ENCODE measurements at regions of chr6 and their contacts with region 1.

Region 1: GRCh38 chr6:107674995-107675738 is 148.9 kb downstream of the SCML4 start:
- DNase-seq: peak; percentile 93
- H3K4me3 Mint-ChIP-seq: peak overlapping the region; percentile 46
- H3K27ac Mint-ChIP-seq: peak overlapping the region; percentile 54
- H3K4me1 Mint-ChIP-seq: peaks cover 21% of the 10 kb centered on the region
- H3K27me3 Mint-ChIP-seq: peaks cover 17% of the 10 kb centered on the region

Region 2: DNA sequence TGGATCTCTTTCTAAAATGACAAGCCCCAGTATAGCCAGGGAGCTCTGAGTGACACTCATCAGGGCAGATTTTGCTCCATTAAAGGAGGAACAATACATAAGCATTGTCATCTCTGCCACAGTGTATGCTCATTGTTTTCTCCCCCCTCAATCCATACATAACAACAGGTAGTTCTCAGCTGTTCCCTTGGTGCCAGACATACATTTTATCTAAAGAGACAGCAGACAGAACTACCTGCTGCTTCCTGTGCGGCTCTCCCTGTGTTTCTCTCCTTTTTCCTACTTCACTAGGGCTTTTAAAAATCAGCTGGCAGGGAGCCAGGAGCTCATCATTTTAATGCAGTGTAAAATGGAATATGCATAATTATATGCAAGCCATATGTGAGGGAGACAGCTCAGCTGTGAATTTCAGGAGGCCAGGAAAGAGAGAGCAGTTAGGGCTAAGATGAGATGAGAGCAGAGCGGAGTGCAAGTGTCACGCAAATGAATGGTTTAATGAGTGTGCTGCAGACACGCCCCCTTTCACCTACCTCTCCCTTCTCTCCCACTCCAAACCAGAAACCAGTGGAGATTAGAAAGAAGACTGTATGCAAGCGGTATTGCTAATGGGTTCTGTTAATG is 89.2 kb before region 1 on chr6:
- CTCF ChIA-PET with region 1: no interaction called
- DNase-seq: no peak
- H3K4me3 Mint-ChIP-seq: no peak overlapping the region
- H3K27ac Mint-ChIP-seq: no peak overlapping the region
- H3K4me1 Mint-ChIP-seq: no peaks in the 10 kb centered on the region
- H3K27me3 Mint-ChIP-seq: peaks cover 34% of the 10 kb centered on the region

Region 3: DNA sequence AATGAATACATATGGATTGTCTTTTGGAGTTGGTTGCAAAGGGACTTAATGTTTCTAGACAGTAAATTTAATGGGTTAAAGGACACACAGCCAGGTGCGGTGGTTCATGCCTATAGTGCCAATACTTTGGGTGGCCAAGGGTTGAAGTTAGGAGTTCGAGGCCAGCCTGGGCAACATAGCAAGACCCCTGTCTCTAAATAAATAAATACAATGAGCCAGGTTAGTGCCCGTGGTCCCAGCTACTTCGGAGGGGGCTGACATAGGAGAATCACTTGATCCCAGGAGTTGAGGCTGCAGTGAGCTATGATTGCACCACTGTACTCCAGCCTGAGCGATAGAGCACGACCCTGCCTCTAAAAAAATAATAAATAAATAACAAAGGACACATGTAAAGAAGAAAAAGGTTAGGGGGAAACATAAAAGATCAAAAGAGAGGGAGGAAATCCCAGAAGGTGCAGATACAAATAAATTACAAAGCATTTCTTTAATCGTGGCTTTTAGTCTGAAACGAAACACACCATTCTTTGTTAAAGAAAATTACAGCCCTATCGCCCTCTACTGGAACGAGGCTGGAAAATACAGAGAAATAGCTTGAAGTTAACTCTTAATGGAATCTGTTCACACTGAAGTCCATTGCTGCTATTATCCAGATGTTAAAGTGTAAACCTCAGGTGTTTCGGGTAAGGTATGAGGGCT is 191.6 kb after region 1 on chr6:
- CTCF ChIA-PET with region 1: interaction called, 33 read pairs
- DNase-seq: peak; percentile 56
- H3K4me3 Mint-ChIP-seq: no peak overlapping the region
- H3K27ac Mint-ChIP-seq: no peak overlapping the region
- H3K4me1 Mint-ChIP-seq: peaks cover 12% of the 10 kb centered on the region
- H3K27me3 Mint-ChIP-seq: peaks cover 8% of the 10 kb centered on the region

Measured in activated naive CD4-positive, alpha-beta T cell treated with anti-CD3 and anti-CD28 coated beads, Interleukin-2, amount 10 ng/mL, durations not matched to agents 7 days and 5 days (primary cell).